ENCODE measurements at regions of chr10 and their contacts with region 1.

Region 1: GRCh38 chr10:118423800-118424479 is 81.8 kb upstream of the FAM204A start:
- DNase-seq: peak; percentile 73
- H3K4me3 ChIP-seq: no peak overlapping the region
- H3K27ac ChIP-seq: no peak overlapping the region
- H3K4me1 ChIP-seq: no peaks in the 10 kb centered on the region
- H3K27me3 ChIP-seq: no peaks in the 10 kb centered on the region
- CTCF ChIP-seq: peak; percentile 70

Region 2: GRCh38 chr10:118383699-118384098 is 40.2 kb before region 1 on chr10:
- intact Hi-C with region 1: no loop called
- DNase-seq: no peak
- H3K4me3 ChIP-seq: no peak overlapping the region
- H3K27ac ChIP-seq: no peak overlapping the region
- H3K4me1 ChIP-seq: no peaks in the 10 kb centered on the region
- H3K27me3 ChIP-seq: no peaks in the 10 kb centered on the region
- CTCF ChIP-seq: no peak

Region 3: DNA sequence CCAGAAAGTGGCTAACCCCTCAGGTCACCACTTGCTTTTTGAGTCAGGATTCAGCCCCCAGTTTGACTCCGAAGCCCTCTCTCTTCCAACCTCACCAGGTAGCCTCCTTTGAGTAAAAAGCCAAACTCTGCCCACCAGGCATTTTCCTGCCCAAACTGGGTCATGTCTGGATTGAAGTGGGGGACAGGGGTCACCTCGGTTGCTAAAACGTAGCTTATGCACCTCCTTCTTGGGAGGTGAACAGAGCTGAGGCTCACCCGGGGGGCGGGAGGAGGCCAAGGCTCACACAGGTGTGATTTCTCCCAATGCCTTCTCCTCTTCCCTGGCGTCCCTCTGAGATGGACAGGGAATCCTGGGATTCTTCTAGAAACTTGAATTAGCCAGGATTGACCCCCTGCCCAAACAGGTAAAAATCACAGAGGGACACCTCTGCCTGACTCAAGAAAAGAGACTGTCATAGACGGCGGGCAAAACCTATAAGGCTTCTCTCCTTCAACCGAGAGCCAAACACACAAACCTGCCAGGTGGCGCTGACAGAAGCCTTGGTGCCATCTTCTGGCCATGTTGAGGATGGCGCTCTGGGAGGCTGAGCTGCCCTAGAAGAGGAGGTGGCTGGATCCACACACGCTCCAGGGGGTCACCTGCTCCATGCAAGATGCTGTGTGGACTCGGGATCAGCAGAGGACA is 119.9 kb after region 1 on chr10:
- intact Hi-C with region 1: loop called (anchors 5 kb)
- DNase-seq: peak; percentile 44
- H3K4me3 ChIP-seq: no peak overlapping the region
- H3K27ac ChIP-seq: no peak overlapping the region
- H3K4me1 ChIP-seq: no peaks in the 10 kb centered on the region
- H3K27me3 ChIP-seq: no peaks in the 10 kb centered on the region
- CTCF ChIP-seq: peak; percentile 48

Measured in colonic mucosa (tissue), 4 donors.